ENCODE measurements at regions of chr6 and their contacts with region 1.

Region 1: DNA sequence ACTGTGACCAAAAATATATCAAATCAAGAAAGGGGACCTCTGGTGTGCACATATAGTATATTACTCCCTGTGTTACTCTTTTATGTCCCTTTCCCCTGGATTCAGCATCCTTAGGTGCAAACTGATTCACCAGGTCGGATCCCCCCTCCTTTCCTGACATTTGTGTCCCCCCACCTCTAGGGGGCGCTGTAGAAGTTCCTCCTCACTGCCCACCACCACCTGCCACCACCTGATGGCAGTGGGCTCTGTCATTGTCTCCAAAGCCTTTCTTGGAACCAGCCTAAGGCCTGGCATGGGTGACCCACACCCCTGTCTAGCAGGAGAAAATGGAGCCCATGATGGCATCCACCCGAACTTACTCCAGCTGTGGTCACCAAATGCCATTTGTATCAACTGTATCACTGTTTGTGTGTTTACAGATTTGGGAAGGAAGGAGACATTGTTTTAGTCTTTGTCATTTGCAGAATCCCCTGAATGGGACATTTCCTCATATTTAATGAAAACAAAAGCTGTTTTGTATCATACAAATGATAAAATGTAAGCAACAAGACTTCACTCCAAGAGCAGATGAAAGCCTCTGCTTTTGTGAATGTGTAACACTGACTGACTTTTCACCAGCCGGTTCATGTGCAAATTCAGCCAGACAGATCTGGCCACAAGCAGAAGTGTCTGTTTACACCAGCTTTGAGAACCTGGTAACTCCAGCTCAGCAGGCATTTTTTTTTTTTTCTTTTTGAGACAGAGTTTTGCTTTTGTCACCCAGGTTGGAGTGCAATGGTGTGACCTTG is 66.2 kb downstream of the ARMC2 start:
- DNase-seq: peak; percentile 54
- ATAC-seq: no peak
- H3K4me3 Mint-ChIP-seq: no peak overlapping the region
- H3K27ac Mint-ChIP-seq: no peak overlapping the region
- H3K4me1 Mint-ChIP-seq: peaks cover 16% of the 10 kb centered on the region
- H3K27me3 Mint-ChIP-seq: peaks cover 26% of the 10 kb centered on the region

Region 2: GRCh38 chr6:108927927-108928326 is 13.5 kb after region 1 on chr6:
- CTCF ChIA-PET with region 1: interaction called, 44 read pairs
- POLR2A ChIA-PET with region 1: no interaction called
- DNase-seq: no peak
- ATAC-seq: no peak
- H3K4me3 Mint-ChIP-seq: no peak overlapping the region
- H3K27ac Mint-ChIP-seq: no peak overlapping the region
- H3K4me1 Mint-ChIP-seq: peaks cover 20% of the 10 kb centered on the region
- H3K27me3 Mint-ChIP-seq: peaks cover 23% of the 10 kb centered on the region

Region 3: GRCh38 chr6:109263873-109264700 is 349.7 kb after region 1 on chr6:
- CTCF ChIA-PET with region 1: no interaction called
- POLR2A ChIA-PET with region 1: no interaction called
- DNase-seq: no peak
- ATAC-seq: no peak
- H3K4me3 Mint-ChIP-seq: no peak overlapping the region
- H3K27ac Mint-ChIP-seq: no peak overlapping the region
- H3K4me1 Mint-ChIP-seq: peaks cover 10% of the 10 kb centered on the region
- H3K27me3 Mint-ChIP-seq: peaks cover 6% of the 10 kb centered on the region